GM12878 (cell line): ENCODE measurements at regions of chr1 and their contacts with region 1.

Region 1: DNA sequence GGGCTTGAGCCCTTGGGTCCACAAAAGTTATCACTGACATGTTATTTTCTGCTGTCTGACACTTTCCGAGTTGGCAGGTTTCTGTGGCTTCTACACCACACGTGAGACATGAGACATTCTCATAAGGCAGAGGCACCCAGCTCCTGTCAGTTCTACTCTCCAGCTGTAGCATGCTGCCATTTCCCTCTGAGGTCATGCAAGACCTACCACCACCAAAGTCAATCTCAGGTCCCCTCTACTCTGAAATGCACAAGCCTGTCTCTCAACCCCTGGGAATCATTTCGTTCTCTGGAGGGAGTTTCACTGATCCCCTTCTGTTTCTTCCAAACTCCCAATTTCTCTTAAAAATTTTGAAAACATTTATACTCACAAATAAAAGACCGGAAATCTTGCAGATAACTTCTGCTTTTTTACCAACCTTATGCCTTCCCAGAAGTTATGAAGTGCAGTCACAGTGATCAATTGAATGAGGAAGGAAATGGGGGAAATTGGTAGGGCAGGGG is 39.5 kb upstream of the CR2 start:
- DNase-seq: peak; percentile 93
- ATAC-seq: peak; percentile 85
- H3K4me3 ChIP-seq: no peak overlapping the region
- H3K27ac ChIP-seq: peak overlapping the region; percentile 86
- H3K4me1 ChIP-seq: peaks cover 40% of the 10 kb centered on the region
- H3K27me3 ChIP-seq: no peaks in the 10 kb centered on the region
- CTCF ChIP-seq: no peak
- EP300 ChIP-seq: peak; percentile 60 to 64; a peak in 2 of 4 replicates
- POLR2A ChIP-seq: peak; percentile 39; the same call in 1 of the 2 replicates
- RAD21 ChIP-seq: no peak

Region 2: GRCh38 chr1:207336559-207337467 is 77.8 kb before region 1 on chr1:
- CTCF ChIA-PET with region 1: no interaction called
- POLR2A ChIA-PET with region 1: interaction called, 3 read pairs
- RAD21 ChIA-PET with region 1: interaction called, 5 read pairs
- SMC1A ChIA-PET with region 1: interaction called, 16 read pairs
- in situ Hi-C with region 1: no loop called
- intact Hi-C with region 1: loop called (anchors 1 kb)
- DNase-seq: peak; percentile 91
- ATAC-seq: peak; percentile 78
- H3K4me3 ChIP-seq: peak overlapping the region; percentile 1; the same call in 1 of the 2 replicates
- H3K27ac ChIP-seq: peak overlapping the region; percentile 81
- H3K4me1 ChIP-seq: peaks cover 47% of the 10 kb centered on the region
- H3K27me3 ChIP-seq: no peaks in the 10 kb centered on the region
- CTCF ChIP-seq: no peak
- EP300 ChIP-seq: peak; percentile 72 to 89; a peak in 3 of 4 replicates
- POLR2A ChIP-seq: no peak
- RAD21 ChIP-seq: no peak

Region 3: DNA sequence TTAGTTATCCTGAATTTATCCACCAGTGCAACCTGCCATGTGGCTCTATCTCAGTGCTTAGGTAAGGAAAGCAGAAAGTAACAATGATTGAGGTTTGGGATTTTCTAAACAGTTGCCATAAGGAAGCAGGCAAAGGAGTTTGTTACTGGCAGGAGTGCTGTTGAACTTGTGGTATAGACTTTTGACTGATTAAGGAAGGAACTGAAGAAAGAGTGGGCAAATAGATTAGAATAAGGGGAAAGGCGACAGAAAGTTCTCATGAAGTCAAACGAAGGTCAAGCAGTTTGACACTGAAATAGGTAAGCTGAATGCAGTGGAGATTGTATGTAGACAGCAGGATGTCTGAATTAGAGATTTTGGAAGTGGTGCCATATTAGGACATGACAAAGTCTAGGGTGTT is 15.3 kb after region 1 on chr1:
- CTCF ChIA-PET with region 1: interaction called, 13 read pairs
- POLR2A ChIA-PET with region 1: interaction called, 15 read pairs
- RAD21 ChIA-PET with region 1: interaction called, 67 read pairs
- SMC1A ChIA-PET with region 1: interaction called, 126 read pairs
- in situ Hi-C with region 1: no loop called
- intact Hi-C with region 1: loop called (anchors 1 kb)
- DNase-seq: peak; percentile 70
- ATAC-seq: peak; percentile 58
- H3K4me3 ChIP-seq: no peak overlapping the region
- H3K27ac ChIP-seq: peak overlapping the region; percentile 19
- H3K4me1 ChIP-seq: peaks cover 39% of the 10 kb centered on the region
- H3K27me3 ChIP-seq: no peaks in the 10 kb centered on the region
- CTCF ChIP-seq: no peak
- EP300 ChIP-seq: no peak
- POLR2A ChIP-seq: no peak
- RAD21 ChIP-seq: 0 out of 2 replicates have a peak, but pooled peaks have one; percentile 11

Region 4: DNA sequence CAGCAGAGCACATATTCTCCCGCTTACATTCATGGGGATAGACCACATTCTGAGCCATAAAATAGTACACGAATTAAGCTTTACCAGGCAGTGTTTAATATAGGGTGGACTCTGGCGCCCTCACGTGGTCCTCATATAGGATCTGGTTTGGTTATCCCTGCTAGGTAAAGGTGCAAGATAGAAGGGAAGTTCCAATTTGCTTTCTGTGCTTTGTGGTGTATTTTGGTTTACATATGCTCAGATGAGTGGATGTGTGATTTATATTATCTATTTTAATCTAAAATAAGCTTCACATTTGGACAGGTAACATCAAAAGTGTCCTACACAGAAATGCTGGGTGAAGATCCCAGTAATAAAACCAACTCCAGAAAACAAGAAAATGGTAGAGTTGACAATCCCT is 84.9 kb after region 1 on chr1:
- CTCF ChIA-PET with region 1: interaction called, 17 read pairs
- POLR2A ChIA-PET with region 1: interaction called, 3 read pairs
- RAD21 ChIA-PET with region 1: interaction called, 11 read pairs
- SMC1A ChIA-PET with region 1: interaction called, 8 read pairs
- in situ Hi-C with region 1: loop called (anchors 5 kb)
- intact Hi-C with region 1: loop called (anchors 1 kb)
- DNase-seq: peak; percentile 64
- ATAC-seq: peak; percentile 81
- H3K4me3 ChIP-seq: no peak overlapping the region
- H3K27ac ChIP-seq: no peak overlapping the region
- H3K4me1 ChIP-seq: peaks cover 6% of the 10 kb centered on the region
- H3K27me3 ChIP-seq: no peaks in the 10 kb centered on the region; a peak in 1 of 4 replicates
- CTCF ChIP-seq: peak; percentile 64 to 85 (median 80)
- EP300 ChIP-seq: no peak
- POLR2A ChIP-seq: no peak
- RAD21 ChIP-seq: peak; percentile 96